ENCODE measurements at regions of chr7 and their contacts with region 1.

Region 1: GRCh38 chr7:121547544-121548092 is 151.5 kb upstream of the FAM3C start:
- DNase-seq: peak; percentile 50
- H3K4me3 ChIP-seq: no peak overlapping the region
- H3K27ac ChIP-seq: no peak overlapping the region
- H3K4me1 ChIP-seq: peaks cover 15% of the 10 kb centered on the region
- H3K27me3 ChIP-seq: no peaks in the 10 kb centered on the region
- CTCF ChIP-seq: peak; percentile 68 to 78

Region 2: DNA sequence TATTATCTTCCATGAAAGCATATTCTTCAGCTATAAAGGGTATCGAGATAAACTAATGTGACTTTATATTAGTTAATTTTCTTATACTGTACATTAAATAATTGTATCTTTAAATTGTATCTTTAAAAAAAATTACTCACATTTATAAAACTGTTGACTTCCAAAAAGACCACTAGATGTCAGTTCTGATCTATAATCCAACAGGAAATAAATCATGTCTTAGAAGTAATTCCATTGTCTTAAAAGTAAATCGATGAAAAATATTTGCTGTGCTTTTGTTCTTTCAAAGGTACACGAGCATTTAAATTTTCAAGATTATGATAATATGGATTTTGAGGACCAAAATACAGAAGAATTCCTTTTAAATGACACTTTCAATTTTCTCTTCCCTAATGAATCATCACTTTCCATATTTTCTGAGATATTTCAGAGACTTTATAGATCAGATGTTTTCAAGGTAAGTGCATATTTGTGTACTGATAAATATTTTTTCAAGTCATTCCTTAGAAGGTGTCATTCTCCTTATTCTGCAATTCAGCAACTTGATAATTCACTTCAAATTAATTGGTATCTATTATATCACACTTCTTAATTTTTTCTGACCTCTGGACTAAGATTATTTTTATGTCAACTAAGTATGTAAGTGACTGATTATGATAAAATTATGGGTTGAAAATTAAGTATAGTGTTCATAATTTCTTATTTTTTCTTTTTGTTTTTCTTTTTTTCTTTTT is 420.6 kb before region 1 on chr7:
- CTCF ChIA-PET with region 1: no interaction called
- dilution Hi-C with region 1: no loop called
- in situ Hi-C with region 1: loop called (anchors 25 kb)
- intact Hi-C with region 1: loop called (anchors 5 kb)
- DNase-seq: no peak
- H3K4me3 ChIP-seq: no peak overlapping the region
- H3K27ac ChIP-seq: no peak overlapping the region
- H3K4me1 ChIP-seq: no peaks in the 10 kb centered on the region
- H3K27me3 ChIP-seq: no peaks in the 10 kb centered on the region
- CTCF ChIP-seq: peak; percentile 37

Region 3: DNA sequence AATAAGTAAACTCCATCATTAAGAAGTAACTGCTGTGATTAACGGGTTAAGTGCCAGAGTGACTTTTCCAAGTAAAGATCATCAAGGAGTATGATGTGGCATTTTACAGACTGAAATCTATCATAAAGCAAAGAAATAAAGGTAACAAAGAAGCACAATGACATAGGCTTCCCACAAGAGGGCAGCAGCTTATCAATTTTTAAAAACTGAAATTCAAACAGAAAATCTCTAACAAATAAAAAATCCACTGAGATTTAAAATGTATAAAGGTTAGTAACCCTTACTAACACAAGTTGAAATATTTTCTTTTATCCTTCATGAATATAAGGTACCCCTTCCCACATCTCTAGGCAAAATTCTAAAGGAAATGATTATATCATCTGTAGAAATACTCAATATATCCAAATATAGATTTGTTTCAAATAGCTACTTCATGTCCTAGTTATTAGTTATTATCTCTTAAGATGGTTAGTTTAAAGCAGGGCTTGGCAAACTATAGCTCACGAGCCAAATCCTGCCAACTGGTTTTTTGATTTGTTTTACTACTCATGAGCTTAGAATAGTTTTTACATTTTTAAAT is 180.7 kb before region 1 on chr7:
- CTCF ChIA-PET with region 1: interaction called, 6 read pairs
- dilution Hi-C with region 1: no loop called
- in situ Hi-C with region 1: loop called (anchors 5 kb)
- intact Hi-C with region 1: loop called (anchors 1 kb)
- DNase-seq: no peak
- H3K4me3 ChIP-seq: no peak overlapping the region
- H3K27ac ChIP-seq: no peak overlapping the region
- H3K4me1 ChIP-seq: peaks cover 4% of the 10 kb centered on the region
- H3K27me3 ChIP-seq: no peaks in the 10 kb centered on the region
- CTCF ChIP-seq: peak; percentile 69

Region 4: DNA sequence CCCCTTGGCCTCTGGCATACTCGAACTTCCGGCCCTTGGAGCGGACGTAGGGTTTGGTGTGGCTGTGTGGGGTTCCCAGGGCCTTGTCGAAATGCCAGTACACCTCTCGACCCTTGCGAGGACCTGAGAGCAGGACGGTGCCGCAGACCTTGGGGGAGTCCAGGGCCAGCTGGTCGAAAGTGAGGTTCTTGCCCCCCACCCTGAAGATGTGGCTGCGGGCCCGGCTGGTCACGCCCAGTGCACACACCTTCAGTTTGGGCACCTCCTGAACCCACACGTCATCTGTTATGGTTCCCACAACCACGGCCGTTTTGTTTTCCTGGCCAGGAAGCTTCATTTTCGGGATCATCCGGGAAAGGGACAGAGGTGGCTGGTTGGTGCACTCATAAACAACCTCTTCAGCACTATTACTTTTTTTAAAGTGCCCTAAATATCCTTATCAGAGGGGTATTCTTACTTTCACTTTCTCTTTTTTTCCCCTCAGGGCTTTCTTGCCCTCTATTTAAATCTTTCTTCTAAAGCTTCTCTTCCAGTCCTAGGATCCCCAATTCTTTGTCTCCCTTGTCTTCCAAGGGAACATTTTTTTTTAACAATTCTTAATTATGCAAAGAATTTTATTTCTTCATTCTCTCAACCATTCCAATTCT is 106.6 kb before region 1 on chr7:
- CTCF ChIA-PET with region 1: no interaction called
- dilution Hi-C with region 1: no loop called
- in situ Hi-C with region 1: no loop called
- intact Hi-C with region 1: loop called (anchors 2 kb)
- DNase-seq: no peak
- H3K4me3 ChIP-seq: no peak overlapping the region
- H3K27ac ChIP-seq: no peak overlapping the region
- H3K4me1 ChIP-seq: peaks cover 13% of the 10 kb centered on the region
- H3K27me3 ChIP-seq: no peaks in the 10 kb centered on the region
- CTCF ChIP-seq: no peak

Region 5: DNA sequence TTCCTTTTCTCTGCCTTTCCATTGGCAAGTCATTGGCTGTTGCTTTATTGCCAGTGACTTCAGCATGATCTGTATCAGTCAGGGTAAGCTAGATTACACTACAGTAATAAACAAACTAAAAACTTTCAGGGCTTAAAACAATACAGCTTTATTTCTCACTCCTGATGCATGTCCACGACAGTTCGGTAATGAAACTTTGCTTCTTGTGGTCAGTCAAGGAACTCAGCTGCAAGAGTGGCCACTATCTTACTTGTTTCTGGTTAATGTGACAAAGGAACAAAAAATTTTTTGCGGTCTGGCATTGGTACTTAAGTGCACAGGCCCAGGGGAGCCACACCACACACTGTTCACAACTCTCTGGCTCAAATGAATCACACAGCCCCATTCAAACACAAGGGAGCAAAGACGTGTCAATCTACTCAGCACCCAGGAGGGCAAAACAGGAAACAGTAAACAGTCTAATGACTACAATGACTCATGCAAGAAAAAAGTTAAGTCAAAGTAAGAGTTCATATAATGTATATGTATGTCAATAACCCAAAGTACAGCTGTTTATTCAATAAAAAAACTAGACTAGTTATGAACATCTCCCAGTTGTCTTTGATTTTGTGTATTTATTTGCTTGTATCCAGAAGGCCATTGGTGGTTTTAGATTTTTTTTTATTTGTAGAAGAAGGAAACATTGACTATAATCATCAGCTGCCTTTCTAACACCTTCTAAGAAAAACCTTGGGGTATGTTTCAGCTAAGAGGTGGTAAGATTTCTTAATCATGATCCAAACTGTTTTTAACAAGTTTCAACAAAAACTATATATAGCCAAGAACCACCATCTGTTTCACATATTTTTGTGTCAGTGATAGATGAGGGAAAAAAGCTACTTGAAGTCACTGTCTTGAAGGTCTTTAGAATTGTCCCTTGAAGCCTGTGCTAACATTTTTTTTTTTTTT is 17.1 kb before region 1 on chr7:
- CTCF ChIA-PET with region 1: no interaction called
- dilution Hi-C with region 1: no loop called
- in situ Hi-C with region 1: no loop called
- intact Hi-C with region 1: loop called (anchors 1 kb)
- DNase-seq: peak; percentile 99
- H3K4me3 ChIP-seq: no peak overlapping the region
- H3K27ac ChIP-seq: peak overlapping the region; percentile 72
- H3K4me1 ChIP-seq: peaks cover 20% of the 10 kb centered on the region
- H3K27me3 ChIP-seq: no peaks in the 10 kb centered on the region
- CTCF ChIP-seq: peak in 1 of 2 donors; percentile 4

Measured in mammary epithelial cell (primary cell).